Aorta (tissue), 5 donors: ENCODE measurements at regions of chr2 and their contacts with region 1.

Region 1: GRCh38 chr2:216698895-216699294 is 3.5 kb upstream of the IGFBP5 start:
- DNase-seq: peak in 1 of 2 donors; percentile 49
- ATAC-seq: peak; percentile 49
- H3K4me3 ChIP-seq: no peak overlapping the region
- H3K27ac ChIP-seq: no peak overlapping the region
- H3K4me1 ChIP-seq: peaks cover 0 to 7% of the 10 kb centered on the region in 2 donors
- H3K27me3 ChIP-seq: no peaks in the 10 kb centered on the region

Region 2: DNA sequence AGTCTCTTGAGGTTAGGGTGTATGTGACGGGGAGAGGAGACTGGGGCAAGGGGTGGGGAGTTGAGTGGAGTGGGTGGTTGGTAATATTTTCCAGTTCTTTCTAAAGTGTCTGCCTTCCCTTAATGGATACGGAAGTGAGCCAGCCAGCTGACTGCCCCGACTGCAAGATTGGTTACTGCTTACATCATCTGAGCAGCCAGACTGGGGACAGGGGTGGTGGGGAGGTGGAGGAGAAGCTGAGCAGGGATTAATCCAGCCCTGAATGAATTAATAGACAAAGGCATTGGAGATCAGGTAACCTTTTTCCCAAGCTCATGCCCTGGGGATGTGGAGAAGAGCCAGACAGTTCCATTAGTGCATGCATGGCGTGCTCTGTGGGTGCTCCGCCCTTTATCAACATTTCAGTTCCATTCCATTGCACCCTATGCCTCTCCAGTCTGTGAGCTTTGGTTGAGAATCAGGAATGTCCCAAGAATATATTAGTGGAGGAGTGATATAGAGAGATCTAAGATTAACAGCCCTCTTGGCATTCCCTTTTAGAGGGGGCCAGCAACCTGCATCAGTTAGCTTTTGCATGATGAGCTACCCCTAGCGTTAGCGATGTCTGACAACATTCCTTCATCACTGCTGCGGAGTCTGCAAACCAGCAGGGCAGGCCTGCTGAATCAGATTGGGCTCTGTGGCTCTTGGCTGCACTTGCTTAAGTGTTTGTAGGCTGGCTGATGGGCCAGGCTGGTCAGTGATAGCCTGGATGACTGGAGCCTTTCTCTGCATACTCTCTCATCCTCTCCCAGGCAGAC is 93.5 kb after region 1 on chr2:
- intact Hi-C with region 1: loop called in 1 of 2 experiments (anchors 5 kb)
- DNase-seq: peak; percentile 86 to 90
- ATAC-seq: peak; percentile 90
- H3K4me3 ChIP-seq: no peak overlapping the region
- H3K27ac ChIP-seq: peak overlapping the region; percentile 73 to 98
- H3K4me1 ChIP-seq: peaks cover 0 to 6% of the 10 kb centered on the region in 2 donors
- H3K27me3 ChIP-seq: no peaks in the 10 kb centered on the region

Region 3: GRCh38 chr2:217027414-217027813 is 328.5 kb after region 1 on chr2:
- intact Hi-C with region 1: no loop called
- DNase-seq: no peak
- ATAC-seq: no peak
- H3K4me3 ChIP-seq: no peak overlapping the region
- H3K27ac ChIP-seq: no peak overlapping the region
- H3K4me1 ChIP-seq: peaks cover 0 to 1% of the 10 kb centered on the region in 2 donors
- H3K27me3 ChIP-seq: no peaks in the 10 kb centered on the region

Region 4: GRCh38 chr2:217054791-217055190 is 355.9 kb after region 1 on chr2:
- intact Hi-C with region 1: loop called (anchors 5 to 10 kb)
- DNase-seq: peak in 1 of 2 donors; percentile 73
- ATAC-seq: no peak
- H3K4me3 ChIP-seq: no peak overlapping the region
- H3K27ac ChIP-seq: peak overlapping the region; percentile 95 to 96
- H3K4me1 ChIP-seq: peaks cover 6 to 12% of the 10 kb centered on the region in 2 donors
- H3K27me3 ChIP-seq: no peaks in the 10 kb centered on the region

Region 5: DNA sequence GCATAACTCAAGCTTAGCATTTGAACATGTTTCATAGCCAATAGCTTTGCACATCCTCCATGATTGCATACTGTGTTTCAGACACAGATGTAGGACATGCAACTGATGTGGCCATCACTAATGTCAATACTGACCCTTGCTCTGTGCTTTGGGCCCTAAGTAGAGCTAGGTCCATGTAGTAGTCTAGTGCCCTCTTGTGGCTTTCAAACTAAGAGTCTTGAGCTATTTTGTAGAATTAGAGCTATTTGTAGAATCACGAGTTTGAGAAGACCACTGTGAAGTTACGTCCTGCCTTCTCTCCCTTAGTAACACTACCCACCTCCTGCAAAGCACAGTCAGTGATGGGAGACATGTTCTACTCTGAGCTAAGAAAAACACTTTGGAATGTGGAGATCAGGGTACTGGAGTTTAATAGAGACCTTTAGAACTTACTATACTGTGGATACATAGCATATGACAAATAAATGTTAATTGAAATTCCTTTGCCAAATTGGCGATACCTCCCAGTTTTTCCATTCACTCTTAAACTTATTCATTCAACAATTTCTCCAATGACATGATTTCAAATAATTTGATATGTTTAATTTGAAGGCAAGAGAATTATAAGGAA is 467.5 kb after region 1 on chr2:
- intact Hi-C with region 1: loop called (anchors 2 to 5 kb)
- DNase-seq: no peak
- ATAC-seq: peak; percentile 81
- H3K4me3 ChIP-seq: no peak overlapping the region
- H3K27ac ChIP-seq: no peak overlapping the region
- H3K4me1 ChIP-seq: no peaks in the 10 kb centered on the region
- H3K27me3 ChIP-seq: no peaks in the 10 kb centered on the region

Region 6: GRCh38 chr2:217434181-217434975 is 735.5 kb after region 1 on chr2:
- intact Hi-C with region 1: loop called in 1 of 2 experiments (anchors 10 kb)
- DNase-seq: peak; percentile 91
- ATAC-seq: peak; percentile 94
- H3K4me3 ChIP-seq: peak overlapping the region in 1 of 2 donors; percentile 31
- H3K27ac ChIP-seq: peak overlapping the region in 1 of 2 donors; percentile 11
- H3K4me1 ChIP-seq: peaks cover 9 to 15% of the 10 kb centered on the region in 2 donors
- H3K27me3 ChIP-seq: no peaks in the 10 kb centered on the region

Region 7: GRCh38 chr2:217756375-217757107 is 1057.6 kb after region 1 on chr2:
- intact Hi-C with region 1: loop called in 1 of 2 experiments (anchors 5 kb)
- DNase-seq: peak; percentile 84 to 94
- ATAC-seq: peak; percentile 89
- H3K4me3 ChIP-seq: no peak overlapping the region
- H3K27ac ChIP-seq: peak overlapping the region; percentile 24 to 30
- H3K4me1 ChIP-seq: peaks cover 3 to 6% of the 10 kb centered on the region in 2 donors
- H3K27me3 ChIP-seq: no peaks in the 10 kb centered on the region